A673 (cell line): ENCODE measurements at regions of chr3 and their contacts with region 1.

Region 1: DNA sequence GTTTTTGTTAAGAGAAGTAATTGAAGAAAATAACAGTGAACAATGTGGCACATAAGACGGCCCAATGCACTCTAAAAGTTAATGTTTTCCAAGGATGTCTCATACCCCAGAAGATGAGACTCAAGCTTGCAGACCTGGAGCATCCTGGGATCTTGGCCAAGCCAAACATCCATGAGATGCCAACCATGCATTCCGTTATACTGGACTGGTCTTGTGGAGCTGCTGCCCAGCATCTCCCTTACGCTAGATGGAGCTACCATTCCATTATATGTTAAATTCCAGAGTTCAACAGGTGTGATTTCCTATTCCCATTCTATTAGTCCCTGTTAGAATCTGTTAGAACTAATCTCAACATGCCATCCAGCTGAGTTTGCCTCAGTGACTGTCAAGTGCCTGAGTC is 181.8 kb downstream of the PDCD6IP start:
- DNase-seq: peak; percentile 74
- H3K4me3 ChIP-seq: no peak overlapping the region
- H3K27ac ChIP-seq: no peak overlapping the region
- H3K4me1 ChIP-seq: peaks cover 5% of the 10 kb centered on the region
- H3K27me3 ChIP-seq: no peaks in the 10 kb centered on the region
- CTCF ChIP-seq: peak; percentile 72

Region 2: DNA sequence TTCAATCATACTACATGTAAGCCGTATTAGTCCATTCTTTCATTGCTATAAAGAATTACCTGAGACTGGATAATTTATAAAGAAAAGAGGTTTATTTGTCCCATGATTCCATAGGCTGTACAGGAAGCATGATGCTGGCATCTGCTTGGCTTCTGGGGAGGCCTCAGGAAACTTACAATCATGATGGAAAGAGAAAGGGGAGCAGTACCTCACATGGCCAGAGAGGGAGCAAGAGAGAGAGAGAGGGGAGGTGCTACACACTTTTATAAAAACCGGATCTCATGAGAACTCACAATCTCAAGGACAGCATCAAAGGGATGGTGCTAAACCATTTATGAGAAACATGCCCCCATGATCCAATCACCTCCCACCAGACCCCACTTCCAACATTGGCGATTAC is 247.9 kb before region 1 on chr3:
- CTCF ChIA-PET with region 1: no interaction called
- POLR2A ChIA-PET with region 1: no interaction called
- intact Hi-C with region 1: no loop called
- DNase-seq: peak; percentile 30
- H3K4me3 ChIP-seq: no peak overlapping the region
- H3K27ac ChIP-seq: no peak overlapping the region
- H3K4me1 ChIP-seq: no peaks in the 10 kb centered on the region
- H3K27me3 ChIP-seq: no peaks in the 10 kb centered on the region
- CTCF ChIP-seq: peak; percentile 46; the same call in 1 of the 2 replicates

Region 3: GRCh38 chr3:33855884-33856546 is 124.2 kb before region 1 on chr3:
- CTCF ChIA-PET with region 1: interaction called, 10 read pairs
- POLR2A ChIA-PET with region 1: no interaction called
- intact Hi-C with region 1: no loop called
- DNase-seq: no peak
- H3K4me3 ChIP-seq: no peak overlapping the region
- H3K27ac ChIP-seq: no peak overlapping the region
- H3K4me1 ChIP-seq: no peaks in the 10 kb centered on the region
- H3K27me3 ChIP-seq: no peaks in the 10 kb centered on the region
- CTCF ChIP-seq: no peak

Region 4: GRCh38 chr3:35422836-35423601 is 1442.8 kb after region 1 on chr3:
- CTCF ChIA-PET with region 1: no interaction called
- POLR2A ChIA-PET with region 1: no interaction called
- intact Hi-C with region 1: no loop called
- DNase-seq: peak; percentile 20
- H3K4me3 ChIP-seq: no peak overlapping the region
- H3K27ac ChIP-seq: peak overlapping the region; percentile 33
- H3K4me1 ChIP-seq: peaks cover 8% of the 10 kb centered on the region
- H3K27me3 ChIP-seq: no peaks in the 10 kb centered on the region
- CTCF ChIP-seq: no peak